SK-N-SH (cell line): ENCODE measurements at regions of chr16 and their contacts with region 1.

Region 1: GRCh38 chr16:67641779-67642708 is 2.9 kb upstream of the CARMIL2 start:
- DNase-seq: no peak
- H3K4me3 ChIP-seq: no peak overlapping the region
- H3K27ac ChIP-seq: no peak overlapping the region
- H3K4me1 ChIP-seq: peaks cover 0 to 4% of the 10 kb centered on the region in 2 experiments; a peak in 1 of 4 replicates
- H3K27me3 ChIP-seq: no peaks in the 10 kb centered on the region
- CTCF ChIP-seq: no peak
- EP300 ChIP-seq: no peak
- RAD21 ChIP-seq: no peak

Region 2: DNA sequence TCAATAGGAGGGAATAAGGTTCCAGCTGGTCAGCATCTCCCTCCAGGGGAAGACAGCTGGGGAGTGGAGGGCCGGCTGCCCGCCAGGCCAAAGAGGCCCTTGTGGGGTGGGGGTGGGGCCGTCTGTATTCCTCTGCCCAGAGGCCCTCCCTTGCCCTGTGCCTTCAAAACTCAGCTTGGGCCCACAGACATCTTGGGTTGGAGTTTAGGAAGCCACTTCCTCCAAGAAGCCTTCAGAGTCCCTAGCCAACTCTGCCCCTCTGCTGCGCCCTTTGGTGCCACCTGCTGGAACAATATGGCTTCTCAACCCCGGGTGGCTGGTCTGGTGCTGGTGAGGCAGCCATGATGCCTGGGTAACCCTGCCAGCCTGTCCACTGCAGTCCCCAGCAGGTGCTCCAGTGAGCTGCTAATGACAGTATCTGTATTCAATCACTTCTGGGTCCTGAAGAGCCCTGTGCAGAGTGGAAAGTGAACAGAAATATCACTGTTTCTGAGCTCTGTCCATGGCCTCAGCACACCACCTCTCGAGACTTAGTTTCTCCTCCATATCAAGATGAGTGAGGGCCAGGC is 194.5 kb before region 1 on chr16:
- CTCF ChIA-PET with region 1: no interaction called
- POLR2A ChIA-PET with region 1: no interaction called
- DNase-seq: peak; percentile 70
- H3K4me3 ChIP-seq: no peak overlapping the region
- H3K27ac ChIP-seq: no peak overlapping the region
- H3K4me1 ChIP-seq: peaks cover 0 to 32% of the 10 kb centered on the region in 2 experiments; a peak in 1 of 4 replicates
- H3K27me3 ChIP-seq: no peaks in the 10 kb centered on the region
- CTCF ChIP-seq: peak; percentile 55
- EP300 ChIP-seq: no peak
- RAD21 ChIP-seq: peak; percentile 44; the same call in 1 of the 2 replicates

Region 3: GRCh38 chr16:67514382-67514828 is 127.6 kb before region 1 on chr16:
- CTCF ChIA-PET with region 1: interaction called, 37 read pairs
- POLR2A ChIA-PET with region 1: no interaction called
- DNase-seq: peak; percentile 61
- H3K4me3 ChIP-seq: no peak overlapping the region; a peak in 1 of 4 replicates
- H3K27ac ChIP-seq: no peak overlapping the region
- H3K4me1 ChIP-seq: peaks cover 0 to 11% of the 10 kb centered on the region in 2 experiments; a peak in 1 of 4 replicates
- H3K27me3 ChIP-seq: no peaks in the 10 kb centered on the region
- CTCF ChIP-seq: peak; percentile 82
- EP300 ChIP-seq: no peak
- RAD21 ChIP-seq: peak; percentile 74

Region 4: GRCh38 chr16:67537270-67537635 is 104.8 kb before region 1 on chr16:
- CTCF ChIA-PET with region 1: interaction called, 25 read pairs
- POLR2A ChIA-PET with region 1: no interaction called
- DNase-seq: peak; percentile 85
- H3K4me3 ChIP-seq: peak overlapping the region; percentile 52 to 71
- H3K27ac ChIP-seq: peak overlapping the region in 1 of 2 experiments; percentile 47; a peak in 2 of 4 replicates
- H3K4me1 ChIP-seq: peaks cover 0 to 9% of the 10 kb centered on the region in 2 experiments; a peak in 1 of 4 replicates
- H3K27me3 ChIP-seq: no peaks in the 10 kb centered on the region
- CTCF ChIP-seq: no peak
- EP300 ChIP-seq: no peak
- RAD21 ChIP-seq: no peak

Region 5: GRCh38 chr16:67660564-67661028 is 18.6 kb after region 1 on chr16 and contains the start of gene PARD6A:
- CTCF ChIA-PET with region 1: interaction called, 56 read pairs
- POLR2A ChIA-PET with region 1: interaction called, 6 read pairs
- DNase-seq: peak; percentile 99
- H3K4me3 ChIP-seq: peak within 1 kb of the TSS; percentile 87 to 97
- H3K27ac ChIP-seq: peak within 1 kb of the TSS; percentile 94 to 95
- H3K4me1 ChIP-seq: peaks cover 0 to 25% of the 10 kb centered on the region in 2 experiments; a peak in 1 of 4 replicates
- H3K27me3 ChIP-seq: no peaks in the 10 kb centered on the region
- CTCF ChIP-seq: no peak
- EP300 ChIP-seq: no peak
- RAD21 ChIP-seq: no peak
- polyA plus RNA-seq, gene PARD6A: 5.7 and 9.0 TPM in 2 replicates

Region 6: GRCh38 chr16:67694611-67695010 is 52.6 kb after region 1 on chr16:
- CTCF ChIA-PET with region 1: no interaction called
- POLR2A ChIA-PET with region 1: no interaction called
- DNase-seq: no peak
- H3K4me3 ChIP-seq: no peak overlapping the region
- H3K27ac ChIP-seq: no peak overlapping the region
- H3K4me1 ChIP-seq: no peaks in the 10 kb centered on the region
- H3K27me3 ChIP-seq: no peaks in the 10 kb centered on the region
- CTCF ChIP-seq: no peak
- EP300 ChIP-seq: no peak
- RAD21 ChIP-seq: no peak